ENCODE measurements at regions of chr3 and their contacts with region 1.

Region 1: DNA sequence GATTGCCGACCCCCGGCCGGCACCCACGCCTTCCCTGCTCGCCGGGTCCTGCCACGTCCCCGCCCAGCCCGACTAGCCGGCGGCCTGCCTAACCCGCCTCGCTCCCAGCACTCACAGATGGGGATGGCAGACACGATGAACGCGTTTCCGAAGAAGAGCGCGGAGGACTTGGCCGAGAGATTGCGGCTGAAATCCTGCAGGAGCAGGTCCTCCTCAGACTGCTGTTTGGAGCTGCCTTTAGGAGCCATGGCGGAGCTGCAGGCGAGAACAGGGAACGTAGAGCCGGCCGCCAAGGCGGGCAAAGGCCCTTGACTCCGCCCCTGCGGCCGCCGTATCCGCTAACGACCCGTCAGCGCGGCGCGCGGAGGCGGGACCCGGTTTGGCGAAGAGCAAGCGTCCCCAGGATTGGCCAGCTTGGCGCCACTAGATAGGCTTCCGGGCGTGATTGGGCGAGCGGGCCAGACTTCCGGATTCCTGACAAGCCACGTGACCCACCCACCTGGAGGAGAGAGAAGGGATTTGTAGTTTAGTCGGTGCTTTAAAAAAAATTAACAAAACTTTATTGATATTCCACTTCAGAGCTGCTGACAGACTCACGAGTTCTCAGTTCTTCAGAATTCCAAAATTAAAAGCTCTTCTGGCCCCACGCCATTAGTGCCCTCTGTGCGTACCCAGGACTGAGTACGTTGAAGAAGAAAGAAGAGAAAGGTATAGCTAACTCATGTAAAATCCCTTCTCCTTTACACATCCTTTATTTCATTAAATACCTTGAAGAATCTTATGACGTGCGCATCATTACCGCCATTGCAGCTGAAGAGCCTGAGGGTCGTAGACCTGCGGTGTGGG is at the start of gene SSR3:
- DNase-seq: peak; percentile 99
- ATAC-seq: peak; percentile 100
- H3K4me3 Mint-ChIP-seq: peak within 1 kb of the TSS; percentile 94
- H3K27ac Mint-ChIP-seq: peak within 1 kb of the TSS; percentile 92
- H3K4me1 Mint-ChIP-seq: peaks cover 45% of the 10 kb centered on the region
- H3K27me3 Mint-ChIP-seq: no peaks in the 10 kb centered on the region
- total RNA-seq, gene SSR3: 121 to 147 TPM

Region 2: GRCh38 chr3:157130467-157131251 is 575.6 kb after region 1 on chr3:
- CTCF ChIA-PET with region 1: interaction called, 14 read pairs
- DNase-seq: peak; percentile 86
- ATAC-seq: peak; percentile 32
- H3K4me3 Mint-ChIP-seq: peak overlapping the region; percentile 59
- H3K27ac Mint-ChIP-seq: peak overlapping the region; percentile 96
- H3K4me1 Mint-ChIP-seq: peaks cover 83% of the 10 kb centered on the region
- H3K27me3 Mint-ChIP-seq: no peaks in the 10 kb centered on the region

Measured in activated CD8-positive, alpha-beta memory T cell treated with anti-CD3 and anti-CD28 coated beads, Interleukin-2, amount 10 ng/mL, durations not matched to agents 7 days and 5 days (primary cell).